IMR-90 (cell line): ENCODE measurements at regions of chr5 and their contacts with region 1.

Region 1: DNA sequence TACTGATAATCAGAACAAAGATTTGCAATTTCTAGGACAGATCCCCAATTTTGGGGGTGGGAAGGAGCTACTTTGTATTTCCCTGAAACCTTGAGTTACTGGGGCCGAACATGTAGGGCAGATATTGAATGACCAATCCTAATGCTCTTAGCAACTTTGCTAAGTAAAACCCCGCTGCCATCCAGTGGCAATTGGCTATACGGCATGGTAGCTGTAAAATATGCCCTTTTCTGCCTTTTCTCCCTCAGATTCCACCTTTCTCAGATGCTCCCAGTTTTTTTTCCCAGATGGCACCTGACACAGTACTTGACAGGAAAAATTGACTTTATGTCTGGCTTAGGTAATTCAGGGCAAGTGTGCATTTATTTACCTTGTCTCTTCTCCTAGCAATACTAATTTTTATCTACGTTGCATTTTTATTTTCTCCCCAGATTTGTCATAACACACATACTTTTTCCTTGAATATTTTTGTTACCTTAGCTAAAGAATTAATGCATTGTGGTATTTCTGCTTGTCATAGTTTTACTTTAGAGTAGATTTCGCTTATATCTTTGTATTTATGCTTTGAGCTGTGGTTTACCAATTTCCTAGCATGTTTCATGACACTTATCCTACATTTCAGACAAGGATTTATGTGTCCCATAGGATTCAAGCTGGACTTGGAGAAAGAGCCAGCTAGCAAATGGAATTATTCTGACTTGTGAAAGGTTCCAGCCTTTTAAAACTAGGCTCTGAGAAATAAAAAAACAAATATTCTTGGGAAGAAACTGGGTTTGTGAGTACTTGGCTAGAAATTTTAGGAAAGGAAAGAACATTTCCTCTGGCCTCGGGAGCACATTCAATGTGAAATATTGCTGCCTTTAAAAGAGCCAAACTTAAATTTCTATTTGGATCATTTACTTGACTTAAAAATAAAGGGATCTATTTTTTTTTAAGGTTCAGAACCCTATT is 37.4 kb downstream of the PIK3R1 start:
- DNase-seq: peak; percentile 78
- ATAC-seq: peak; percentile 93
- H3K4me3 ChIP-seq: no peak overlapping the region
- H3K27ac ChIP-seq: no peak overlapping the region
- H3K4me1 ChIP-seq: peaks cover 12% of the 10 kb centered on the region
- H3K27me3 ChIP-seq: no peaks in the 10 kb centered on the region
- CTCF ChIP-seq: peak; percentile 95
- POLR2A ChIP-seq: no peak
- RAD21 ChIP-seq: peak; percentile 98

Region 2: GRCh38 chr5:66807743-66808142 is 1445.2 kb before region 1 on chr5:
- CTCF ChIA-PET with region 1: no interaction called
- POLR2A ChIA-PET with region 1: no interaction called
- dilution Hi-C with region 1: no loop called
- in situ Hi-C with region 1: loop called (anchors 25 kb)
- intact Hi-C with region 1: loop called (anchors 10 kb)
- DNase-seq: peak; percentile 55
- ATAC-seq: peak; percentile 93
- H3K4me3 ChIP-seq: no peak overlapping the region
- H3K27ac ChIP-seq: no peak overlapping the region
- H3K4me1 ChIP-seq: no peaks in the 10 kb centered on the region
- H3K27me3 ChIP-seq: peaks cover 12% of the 10 kb centered on the region
- CTCF ChIP-seq: peak; percentile 61
- POLR2A ChIP-seq: no peak
- RAD21 ChIP-seq: peak; percentile 73

Region 3: GRCh38 chr5:67156976-67157583 is 1095.9 kb before region 1 on chr5:
- CTCF ChIA-PET with region 1: no interaction called
- POLR2A ChIA-PET with region 1: no interaction called
- dilution Hi-C with region 1: no loop called
- in situ Hi-C with region 1: no loop called
- intact Hi-C with region 1: loop called (anchors 2 kb)
- DNase-seq: peak; percentile 32
- ATAC-seq: peak; percentile 40; the same call in 1 of the 2 replicates
- H3K4me3 ChIP-seq: no peak overlapping the region
- H3K27ac ChIP-seq: no peak overlapping the region
- H3K4me1 ChIP-seq: no peaks in the 10 kb centered on the region
- H3K27me3 ChIP-seq: no peaks in the 10 kb centered on the region
- CTCF ChIP-seq: peak; percentile 65
- POLR2A ChIP-seq: no peak
- RAD21 ChIP-seq: peak; percentile 57

Region 4: DNA sequence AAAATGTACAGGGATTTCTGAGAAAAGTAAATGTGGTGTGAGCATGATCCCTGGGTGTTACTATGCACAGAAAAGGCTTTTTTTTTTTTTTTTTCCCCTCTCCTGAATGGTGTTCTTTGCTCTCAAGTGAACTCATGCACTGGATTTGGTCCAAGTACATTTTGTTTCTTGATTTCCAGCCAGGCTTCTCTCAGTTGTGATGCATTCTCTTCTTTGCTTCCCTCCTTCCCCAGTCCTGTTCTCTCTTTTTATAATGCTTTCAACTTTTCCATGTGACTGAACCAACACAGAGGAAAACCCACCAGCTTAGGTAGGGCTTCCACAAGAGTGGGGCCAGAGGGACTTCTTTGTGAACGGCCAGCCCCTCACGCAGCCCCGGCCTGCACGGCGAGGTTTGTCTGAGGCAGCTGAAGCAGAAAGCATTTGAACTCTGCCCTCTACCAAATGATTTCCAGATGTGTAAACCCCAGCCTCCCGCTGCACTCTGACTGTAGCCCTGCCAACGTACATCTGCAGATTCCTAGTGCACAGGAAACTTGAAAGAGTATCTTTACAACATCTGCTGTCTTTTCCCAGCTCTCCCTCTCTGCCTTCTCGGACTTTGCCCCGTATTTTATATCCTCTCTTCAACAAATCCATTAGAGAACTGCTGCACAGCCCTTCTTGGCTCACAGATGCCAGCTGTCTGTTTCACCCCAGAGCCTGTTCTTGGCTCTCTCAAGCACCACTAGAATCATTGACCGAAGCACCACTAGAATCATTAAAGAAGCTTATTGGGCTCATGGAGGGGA is 984.5 kb before region 1 on chr5:
- CTCF ChIA-PET with region 1: no interaction called
- POLR2A ChIA-PET with region 1: no interaction called
- dilution Hi-C with region 1: no loop called
- in situ Hi-C with region 1: no loop called
- intact Hi-C with region 1: loop called (anchors 1 kb)
- DNase-seq: peak; percentile 95
- ATAC-seq: peak; percentile 89
- H3K4me3 ChIP-seq: no peak overlapping the region
- H3K27ac ChIP-seq: peak overlapping the region; percentile 98; the same call in 1 of the 2 replicates
- H3K4me1 ChIP-seq: peaks cover 16% of the 10 kb centered on the region
- H3K27me3 ChIP-seq: no peaks in the 10 kb centered on the region
- CTCF ChIP-seq: no peak
- POLR2A ChIP-seq: no peak
- RAD21 ChIP-seq: no peak

Region 5: DNA sequence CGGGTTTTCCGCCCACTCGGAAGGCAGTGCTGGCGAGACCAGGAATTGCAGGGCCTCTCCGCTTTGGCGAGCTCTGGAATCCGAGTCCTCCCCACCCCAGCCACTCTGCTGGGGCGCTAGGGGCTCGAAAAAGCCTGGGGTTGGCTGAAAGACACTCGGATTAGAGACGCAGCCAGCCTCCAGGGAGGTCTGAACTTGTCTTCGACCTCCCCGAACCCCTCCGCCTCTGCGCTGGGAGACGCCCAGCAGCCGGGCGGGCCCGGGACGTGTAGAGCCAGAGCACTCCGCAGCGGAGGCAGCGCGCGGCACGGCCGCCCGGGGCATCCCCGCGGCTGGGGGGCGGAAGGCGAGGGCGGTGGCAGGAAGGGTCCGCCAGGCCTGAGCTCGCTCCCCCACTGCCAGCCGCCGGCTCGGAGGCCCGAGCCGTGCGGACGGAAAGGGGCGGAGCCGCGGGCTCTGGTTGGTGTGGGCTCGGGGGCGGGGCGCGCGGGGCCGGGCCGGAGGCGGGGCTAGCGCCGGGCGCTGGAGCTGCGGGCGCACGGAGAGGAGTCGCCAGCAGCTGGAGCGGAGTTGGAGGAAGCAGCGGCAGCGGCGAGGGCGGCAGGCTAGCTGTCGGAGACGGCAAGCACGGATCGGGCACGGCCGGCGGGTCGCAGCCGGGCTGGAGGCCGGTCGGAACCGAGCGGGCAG is 37.6 kb before region 1 on chr5 and contains the start of gene PIK3R1:
- CTCF ChIA-PET with region 1: interaction called, 3 read pairs
- POLR2A ChIA-PET with region 1: interaction called, 3 read pairs
- dilution Hi-C with region 1: no loop called
- in situ Hi-C with region 1: no loop called
- intact Hi-C with region 1: loop called (anchors 5 kb)
- DNase-seq: peak; percentile 91
- ATAC-seq: peak; percentile 93
- H3K4me3 ChIP-seq: peak within 1 kb of the TSS; percentile 83
- H3K27ac ChIP-seq: peak within 1 kb of the TSS; percentile 88
- H3K4me1 ChIP-seq: peaks cover 2% of the 10 kb centered on the region; the same call in 1 of the 2 replicates
- H3K27me3 ChIP-seq: no peaks in the 10 kb centered on the region
- CTCF ChIP-seq: peak; percentile 35; the same call in 1 of the 2 replicates
- POLR2A ChIP-seq: peak; percentile 92
- RAD21 ChIP-seq: no peak
- total RNA-seq, gene PIK3R1: 9.3 and 13.6 TPM in 2 replicates